Activated naive CD4-positive, alpha-beta T cell treated with anti-CD3 and anti-CD28 coated beads for 36 hours (primary cell): ENCODE measurements at regions of chr2 and their contacts with region 1.

Region 1: DNA sequence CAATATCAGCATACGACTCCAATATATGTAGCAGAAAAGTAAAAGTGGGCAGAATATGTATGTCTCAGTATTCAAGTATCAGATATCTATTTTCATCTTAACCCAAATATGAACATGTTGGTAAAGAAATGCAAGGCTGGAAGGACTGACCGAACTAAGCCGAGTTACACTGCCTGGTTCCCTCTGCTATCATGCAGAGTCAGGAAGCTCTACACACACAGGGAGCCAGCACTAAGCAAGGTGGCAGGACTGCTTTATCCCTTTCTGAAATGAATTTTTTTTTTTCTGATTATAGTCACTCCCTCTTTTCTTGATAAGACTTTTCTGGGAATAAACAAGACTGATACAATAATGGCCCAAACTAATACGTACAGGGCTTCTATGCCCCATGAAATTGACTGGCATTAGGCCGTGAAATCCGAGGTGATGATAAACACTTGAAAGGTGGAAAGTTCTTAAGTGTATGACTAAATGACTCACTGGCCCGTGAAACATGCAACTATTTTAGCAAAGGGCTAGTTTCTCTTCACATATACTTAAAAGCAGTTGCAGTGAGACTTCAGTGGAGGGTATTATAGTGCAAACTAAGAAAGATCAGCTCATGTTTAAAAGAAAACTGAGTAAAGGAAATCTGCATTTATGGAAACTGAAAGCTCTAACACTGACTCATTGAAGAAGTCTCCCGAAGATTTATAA is 14.9 kb downstream of the DPP4 start:
- DNase-seq: peak; percentile 57
- H3K4me3 Mint-ChIP-seq: peak overlapping the region; percentile 44
- H3K27ac Mint-ChIP-seq: peak overlapping the region; percentile 89
- H3K4me1 Mint-ChIP-seq: peaks cover 88% of the 10 kb centered on the region
- H3K27me3 Mint-ChIP-seq: no peaks in the 10 kb centered on the region

Region 2: DNA sequence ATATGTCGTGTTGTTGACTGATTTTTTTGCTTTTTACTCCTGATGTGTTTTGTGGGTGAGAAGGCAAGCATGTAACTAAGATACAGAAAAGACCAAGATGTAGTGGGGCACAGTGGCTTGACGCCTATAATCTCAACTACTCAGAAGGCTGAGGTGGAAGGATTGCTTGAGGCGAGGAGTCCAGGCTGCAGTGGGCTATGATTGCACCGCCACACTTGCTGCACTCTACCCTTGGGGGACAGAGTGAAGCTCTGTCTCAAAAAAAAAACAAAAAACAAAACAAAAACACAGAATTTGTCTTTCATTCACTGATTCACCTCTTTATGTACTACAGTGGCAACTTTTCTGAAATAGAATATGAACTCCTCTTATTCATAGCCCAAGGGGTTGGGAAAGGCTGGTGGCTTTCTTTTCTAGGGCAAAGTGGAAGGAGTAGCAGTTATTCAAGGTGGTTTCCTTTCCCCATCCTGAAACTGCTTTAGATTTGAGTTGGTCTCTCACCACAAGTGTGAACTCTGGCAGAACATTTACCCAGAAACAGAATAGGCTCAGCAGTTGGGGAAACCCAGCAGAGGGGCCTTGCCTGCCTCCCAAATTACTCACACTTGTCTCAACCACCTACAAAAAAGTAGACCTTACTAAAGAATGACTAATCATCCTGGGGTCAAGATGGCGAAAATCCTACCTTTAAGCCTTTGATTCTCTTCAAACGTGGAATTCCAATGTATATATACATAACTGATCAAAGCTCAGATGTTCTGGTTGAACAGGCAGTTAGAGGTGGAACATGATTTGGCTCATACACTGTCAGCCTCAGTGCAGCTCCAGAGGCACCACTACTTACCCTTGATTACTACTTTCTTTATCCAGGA is 892.3 kb before region 1 on chr2:
- CTCF ChIA-PET with region 1: no interaction called
- intact Hi-C with region 1: loop called (anchors 2 kb)
- DNase-seq: peak; percentile 88
- H3K4me3 Mint-ChIP-seq: no peak overlapping the region
- H3K27ac Mint-ChIP-seq: peak overlapping the region; percentile 74
- H3K4me1 Mint-ChIP-seq: peaks cover 88% of the 10 kb centered on the region
- H3K27me3 Mint-ChIP-seq: no peaks in the 10 kb centered on the region

Region 3: DNA sequence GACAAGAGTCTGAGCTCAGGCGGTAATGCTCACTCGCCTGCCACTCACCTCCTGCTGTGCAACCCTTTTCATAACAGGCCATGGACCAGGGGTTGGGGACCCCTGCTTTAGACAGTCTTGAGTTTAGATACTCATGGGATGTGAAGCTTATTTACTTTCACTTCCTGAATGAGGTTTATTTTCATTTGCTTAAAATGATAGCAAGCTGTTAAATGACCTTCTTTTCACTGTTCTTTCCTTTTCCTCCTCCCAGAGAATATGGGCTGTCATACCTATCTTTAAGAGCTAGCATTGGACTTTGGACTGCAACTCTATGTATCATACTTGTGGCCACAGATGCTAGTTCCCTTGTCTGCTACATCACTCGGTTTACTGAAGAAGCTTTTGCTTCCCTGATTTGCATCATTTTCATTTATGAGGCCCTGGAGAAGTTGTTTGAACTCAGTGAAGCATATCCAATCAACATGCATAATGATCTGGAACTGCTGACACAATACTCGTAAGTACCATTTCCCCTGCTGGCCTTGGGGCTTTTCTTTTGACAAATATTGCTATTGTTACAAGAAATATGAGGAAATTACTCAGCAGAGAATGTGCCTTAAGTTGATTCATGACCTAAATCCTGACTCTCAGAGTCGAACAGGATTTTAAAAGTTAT is 153.6 kb before region 1 on chr2:
- CTCF ChIA-PET with region 1: no interaction called
- intact Hi-C with region 1: loop called (anchors 1 kb)
- DNase-seq: peak; percentile 50
- H3K4me3 Mint-ChIP-seq: no peak overlapping the region
- H3K27ac Mint-ChIP-seq: peak overlapping the region; percentile 57
- H3K4me1 Mint-ChIP-seq: peaks cover 6% of the 10 kb centered on the region
- H3K27me3 Mint-ChIP-seq: no peaks in the 10 kb centered on the region

Region 4: GRCh38 chr2:161992526-161992925 is 66.6 kb before region 1 on chr2:
- CTCF ChIA-PET with region 1: interaction called, 3 read pairs
- intact Hi-C with region 1: loop called (anchors 1 kb)
- DNase-seq: peak; percentile 80
- H3K4me3 Mint-ChIP-seq: peak overlapping the region; percentile 78
- H3K27ac Mint-ChIP-seq: peak overlapping the region; percentile 97
- H3K4me1 Mint-ChIP-seq: peaks cover 49% of the 10 kb centered on the region
- H3K27me3 Mint-ChIP-seq: no peaks in the 10 kb centered on the region

Region 5: DNA sequence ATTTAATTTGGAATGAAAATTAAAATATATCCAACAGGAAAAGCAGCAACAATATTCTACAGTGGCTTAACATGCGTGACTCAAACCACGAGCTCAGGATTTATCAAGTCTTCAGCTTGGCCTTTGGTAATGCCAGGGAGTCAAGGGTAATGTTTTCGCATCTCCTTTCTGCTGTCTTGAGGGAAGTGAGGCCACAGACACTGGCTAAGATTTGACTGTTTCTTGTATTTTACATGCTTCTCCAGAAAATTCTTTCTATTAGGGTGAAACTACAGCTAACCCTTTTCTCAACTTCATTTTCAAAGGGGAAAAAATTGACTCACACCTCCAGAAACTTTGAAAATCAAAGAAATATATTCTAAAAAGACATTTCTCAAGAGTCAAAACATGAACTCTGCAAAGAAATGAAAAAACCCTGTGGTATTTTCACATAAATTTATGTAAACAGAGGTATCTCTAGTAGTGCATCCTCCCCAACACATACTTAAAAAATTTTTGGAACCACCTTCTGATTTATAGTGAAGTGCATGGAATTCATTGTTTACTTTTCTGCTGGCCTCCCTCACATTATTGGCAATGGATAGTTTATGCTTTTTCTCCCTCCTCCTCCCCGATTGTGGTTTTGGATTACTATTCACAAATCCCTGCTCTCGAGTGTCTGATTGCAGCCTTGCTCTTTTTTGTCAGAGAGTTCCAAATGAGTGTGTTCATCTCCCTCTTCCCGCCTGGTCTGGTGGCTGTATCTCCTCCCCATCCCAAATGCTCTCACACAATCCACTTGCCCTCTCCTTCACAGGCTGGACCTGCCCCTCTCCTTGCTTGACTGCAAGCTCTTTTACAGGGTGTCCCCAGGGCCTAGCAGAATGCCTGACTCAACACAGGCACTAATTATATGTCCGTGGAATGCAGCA is 33.7 kb before region 1 on chr2:
- CTCF ChIA-PET with region 1: interaction called, 3 read pairs
- intact Hi-C with region 1: loop called (anchors 1 kb)
- DNase-seq: peak; percentile 32
- H3K4me3 Mint-ChIP-seq: no peak overlapping the region
- H3K27ac Mint-ChIP-seq: no peak overlapping the region
- H3K4me1 Mint-ChIP-seq: peaks cover 63% of the 10 kb centered on the region
- H3K27me3 Mint-ChIP-seq: no peaks in the 10 kb centered on the region

Region 6: GRCh38 chr2:162103446-162104009 is 44.4 kb after region 1 on chr2:
- CTCF ChIA-PET with region 1: no interaction called
- intact Hi-C with region 1: no loop called
- DNase-seq: no peak
- H3K4me3 Mint-ChIP-seq: no peak overlapping the region
- H3K27ac Mint-ChIP-seq: no peak overlapping the region
- H3K4me1 Mint-ChIP-seq: no peaks in the 10 kb centered on the region
- H3K27me3 Mint-ChIP-seq: no peaks in the 10 kb centered on the region

Region 7: GRCh38 chr2:162123806-162124758 is 65.0 kb after region 1 on chr2:
- CTCF ChIA-PET with region 1: interaction called, 4 read pairs
- intact Hi-C with region 1: loop called (anchors 5 kb)
- DNase-seq: no peak
- H3K4me3 Mint-ChIP-seq: no peak overlapping the region
- H3K27ac Mint-ChIP-seq: no peak overlapping the region
- H3K4me1 Mint-ChIP-seq: peaks cover 3% of the 10 kb centered on the region
- H3K27me3 Mint-ChIP-seq: no peaks in the 10 kb centered on the region

Region 8: DNA sequence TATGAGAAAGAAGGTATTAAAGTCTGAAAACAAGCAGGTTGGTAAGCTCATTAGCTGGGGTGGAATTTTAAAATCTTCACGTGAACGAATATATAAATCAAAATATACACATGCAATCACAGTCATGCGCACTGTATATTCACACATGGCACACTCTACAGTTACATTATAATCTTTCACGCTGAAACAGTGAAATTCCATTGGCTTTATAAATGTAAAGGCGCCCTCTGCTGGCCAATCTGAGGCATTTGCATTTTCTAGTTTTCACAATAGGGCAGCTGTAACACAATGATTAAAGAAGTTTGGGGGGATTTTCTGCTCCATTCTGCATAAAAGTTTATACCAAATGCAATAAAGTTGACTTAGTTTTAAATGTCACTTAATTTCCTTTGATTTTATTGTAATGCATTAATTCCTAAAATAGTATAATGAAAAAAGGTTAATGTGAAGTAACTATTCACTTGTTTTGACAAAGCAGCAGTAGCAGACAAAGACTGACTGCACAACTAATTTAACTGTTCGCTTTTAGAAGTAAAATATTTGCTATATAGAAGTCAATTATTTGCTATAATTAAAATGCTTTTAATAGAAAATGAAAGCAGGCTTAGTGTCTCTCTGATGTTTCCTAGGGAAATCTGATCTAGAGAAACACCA is 242.2 kb after region 1 on chr2:
- CTCF ChIA-PET with region 1: no interaction called
- intact Hi-C with region 1: no loop called
- DNase-seq: peak; percentile 71
- H3K4me3 Mint-ChIP-seq: no peak overlapping the region
- H3K27ac Mint-ChIP-seq: no peak overlapping the region
- H3K4me1 Mint-ChIP-seq: no peaks in the 10 kb centered on the region
- H3K27me3 Mint-ChIP-seq: no peaks in the 10 kb centered on the region